Transverse colon (tissue), 4 donors: ENCODE measurements at regions of chr6 and their contacts with region 1.

Region 1: DNA sequence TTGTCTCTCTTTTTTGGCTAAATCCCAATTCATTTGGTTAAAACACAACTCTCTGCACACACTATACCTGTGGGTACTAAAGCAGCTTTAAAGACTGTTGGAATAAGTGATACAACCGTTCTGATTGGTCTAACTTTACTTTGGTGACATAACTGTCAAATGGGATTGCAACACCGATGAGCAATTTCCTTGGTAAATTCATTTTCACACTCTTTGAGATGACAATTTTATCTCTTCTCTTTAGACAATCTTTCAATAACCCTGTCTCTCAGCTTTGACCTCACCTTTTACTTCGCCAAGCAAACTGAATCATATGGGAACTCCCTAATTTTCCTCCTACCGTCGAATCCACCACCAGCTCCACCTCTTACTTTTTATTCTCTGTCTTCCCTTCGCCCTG is 60.8 kb downstream of the ECT2L start:
- DNase-seq: no peak
- H3K4me3 ChIP-seq: no peak overlapping the region
- H3K27ac ChIP-seq: no peak overlapping the region
- H3K4me1 ChIP-seq: no peaks in the 10 kb centered on the region
- H3K27me3 ChIP-seq: no peaks in the 10 kb centered on the region
- CTCF ChIP-seq: no peak
- EP300 ChIP-seq: no peak
- POLR2A ChIP-seq: no peak

Region 2: DNA sequence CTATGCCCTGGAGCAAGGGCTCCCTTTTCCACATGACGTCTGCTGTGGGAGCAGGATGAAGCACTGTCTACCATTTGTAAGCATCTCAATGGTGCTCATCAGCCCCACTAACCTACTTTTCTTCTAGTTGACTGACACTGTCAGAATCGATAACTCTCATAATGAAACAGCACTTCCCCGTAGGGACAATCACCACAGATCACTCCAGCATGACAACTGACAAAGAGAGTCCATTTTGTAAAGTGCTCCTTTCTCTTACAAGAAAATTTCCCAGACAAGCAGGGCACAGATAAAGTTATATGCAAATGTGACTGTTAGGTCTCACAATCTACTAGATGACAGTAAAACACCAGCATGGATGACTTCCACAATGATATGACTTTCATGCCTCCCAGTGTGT is 406.2 kb before region 1 on chr6:
- in situ Hi-C with region 1: no loop called
- intact Hi-C with region 1: no loop called
- DNase-seq: no peak
- H3K4me3 ChIP-seq: no peak overlapping the region
- H3K27ac ChIP-seq: no peak overlapping the region
- H3K4me1 ChIP-seq: peaks cover 0 to 10% (median 4%) of the 10 kb centered on the region in 4 donors
- H3K27me3 ChIP-seq: no peaks in the 10 kb centered on the region
- CTCF ChIP-seq: no peak
- EP300 ChIP-seq: no peak
- POLR2A ChIP-seq: no peak

Region 3: DNA sequence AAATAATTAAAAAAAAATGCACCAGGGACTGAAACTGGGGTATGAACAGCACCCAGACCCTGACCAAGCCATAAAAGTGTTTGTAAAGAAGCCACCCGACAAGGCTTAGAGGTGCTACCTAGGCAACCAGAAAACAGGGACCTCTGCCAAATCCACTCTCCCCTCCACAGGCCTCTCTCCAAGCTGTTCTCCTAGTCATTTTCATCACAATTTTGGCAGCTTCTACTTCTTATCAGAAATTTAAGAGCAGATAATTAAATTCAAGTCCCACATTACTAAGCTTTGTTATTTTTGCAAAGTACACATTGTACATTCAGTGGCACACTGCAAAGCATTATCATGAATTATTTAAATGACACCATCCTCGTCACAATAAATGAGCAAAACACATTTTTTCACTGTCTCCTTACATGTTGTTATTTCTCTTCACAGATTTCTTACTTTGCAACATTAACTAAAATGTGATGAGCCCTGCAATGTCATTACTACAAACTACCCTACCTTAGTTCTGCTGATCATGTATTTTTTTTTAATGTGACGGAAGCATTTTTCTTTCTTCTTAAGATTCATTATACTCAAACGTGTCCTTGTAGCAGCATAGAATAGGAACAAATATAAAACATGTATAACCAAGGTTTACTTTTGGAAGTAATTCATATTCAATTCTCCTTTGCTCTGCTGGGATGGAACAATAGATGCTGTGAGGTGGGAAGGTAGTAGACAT is 22.7 kb before region 1 on chr6:
- in situ Hi-C with region 1: no loop called
- intact Hi-C with region 1: loop called (anchors 1 kb)
- DNase-seq: no peak
- H3K4me3 ChIP-seq: no peak overlapping the region
- H3K27ac ChIP-seq: peak overlapping the region in 2 of 4 donors; percentile 47 to 52
- H3K4me1 ChIP-seq: peaks cover 0 to 6% (median 0%) of the 10 kb centered on the region in 4 donors
- H3K27me3 ChIP-seq: no peaks in the 10 kb centered on the region
- CTCF ChIP-seq: no peak
- EP300 ChIP-seq: no peak
- POLR2A ChIP-seq: no peak